Gastrocnemius medialis (tissue), 4 donors: ENCODE measurements at regions of chr6 and their contacts with region 1.

Region 1: GRCh38 chr6:31862344-31863227 is at the start of gene NEU1:
- DNase-seq: peak; percentile 100
- ATAC-seq: peak; percentile 97
- H3K4me3 ChIP-seq: peak within 1 kb of the TSS; percentile 69 to 92 (median 82)
- H3K27ac ChIP-seq: peak within 1 kb of the TSS; percentile 83 to 91 (median 88)
- H3K4me1 ChIP-seq: peaks cover 20 to 22% of the 10 kb centered on the region in 2 donors
- H3K27me3 ChIP-seq: no peaks in the 10 kb centered on the region
- CTCF ChIP-seq: no peak
- POLR2A ChIP-seq: peak; percentile 97 to 99
- total RNA-seq, gene NEU1: 20.8 to 42.7 (median 38.1) TPM

Region 2: DNA sequence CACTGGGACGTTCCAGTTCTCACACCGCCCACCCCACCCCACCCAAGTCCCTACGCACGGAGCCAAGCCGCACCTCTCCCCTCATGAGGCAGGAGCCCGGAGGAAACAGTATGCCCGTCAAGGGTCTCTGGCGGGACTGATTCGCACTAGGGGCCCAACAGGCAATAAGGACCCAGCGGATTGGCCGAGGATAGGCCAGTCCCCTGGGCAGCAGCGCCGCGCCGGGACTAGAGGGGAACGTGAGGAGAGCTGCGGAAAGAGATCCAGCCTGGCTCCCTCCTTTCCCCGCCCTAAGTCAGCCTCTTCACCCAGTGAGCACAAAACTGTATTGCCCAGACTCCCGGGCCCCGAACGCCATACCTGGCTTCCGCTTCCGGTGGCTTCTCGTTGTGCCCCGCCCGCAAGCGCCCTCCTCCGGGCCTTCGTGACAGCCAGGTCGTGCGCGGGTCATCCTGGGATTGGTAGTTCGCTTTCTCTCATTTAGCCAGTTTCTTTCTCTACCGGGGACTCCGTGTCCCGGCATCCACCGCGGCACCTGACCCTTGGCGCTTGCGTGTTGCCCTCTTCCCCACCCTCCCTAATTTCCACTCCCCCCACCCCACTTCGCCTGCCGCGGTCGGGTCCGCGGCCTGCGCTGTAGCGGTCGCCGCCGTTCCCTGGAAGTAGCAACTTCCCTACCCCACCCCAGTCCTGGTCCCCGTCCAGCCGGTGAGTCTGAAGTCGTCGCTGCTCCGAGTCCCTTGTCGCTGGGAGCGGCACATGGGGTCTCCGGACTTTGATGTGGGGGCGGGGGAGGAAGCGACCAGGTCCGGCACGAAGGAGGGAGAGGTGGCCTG is 196.9 kb before region 1 on chr6 and contains the start of gene CSNK2B:
- in situ Hi-C with region 1: no loop called
- intact Hi-C with region 1: loop called (anchors 1 kb)
- DNase-seq: peak; percentile 99
- ATAC-seq: peak; percentile 86
- H3K4me3 ChIP-seq: peak within 1 kb of the TSS; percentile 83 to 98 (median 94)
- H3K27ac ChIP-seq: peak within 1 kb of the TSS; percentile 93 to 100 (median 97)
- H3K4me1 ChIP-seq: peaks cover 25 to 36% of the 10 kb centered on the region in 2 donors
- H3K27me3 ChIP-seq: no peaks in the 10 kb centered on the region
- CTCF ChIP-seq: peak in 1 of 5 experiments; percentile 19
- POLR2A ChIP-seq: peak; percentile 72
- total RNA-seq, gene CSNK2B: 185 to 251 (median 226) TPM

Region 3: DNA sequence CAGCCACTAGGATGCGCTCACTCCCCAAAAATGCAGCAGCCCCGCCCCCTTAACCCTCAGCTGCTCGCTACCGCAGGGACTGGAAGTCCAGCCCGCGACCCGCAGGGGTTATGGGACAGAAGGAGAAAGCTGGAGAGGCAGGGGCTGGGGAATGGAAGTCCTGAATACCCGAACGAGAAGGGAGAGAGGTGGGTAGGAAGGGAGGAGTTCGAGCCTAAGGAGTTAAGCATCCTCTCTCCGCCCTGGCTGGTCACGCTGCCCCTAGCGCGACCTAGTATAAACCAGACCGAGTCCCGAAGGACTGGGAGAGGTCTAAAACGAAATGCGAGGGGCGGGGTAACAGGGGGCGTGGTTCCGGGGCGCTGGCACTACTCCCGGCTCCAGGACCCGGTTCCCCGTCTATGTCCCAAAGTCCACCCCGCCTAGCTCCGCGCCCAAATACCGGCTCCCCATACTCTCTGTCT is 133.0 kb before region 1 on chr6:
- in situ Hi-C with region 1: no loop called
- intact Hi-C with region 1: no loop called
- DNase-seq: peak; percentile 71 to 84
- ATAC-seq: peak; percentile 75 to 83
- H3K4me3 ChIP-seq: peak overlapping the region; percentile 62 to 95 (median 85)
- H3K27ac ChIP-seq: peak overlapping the region; percentile 78 to 92 (median 88)
- H3K4me1 ChIP-seq: peaks cover 9 to 11% of the 10 kb centered on the region in 2 donors
- H3K27me3 ChIP-seq: peaks cover 0 to 3% (median 0%) of the 10 kb centered on the region in 3 donors
- CTCF ChIP-seq: peak in 4 of 5 experiments; percentile 20 to 64 (median 42)
- POLR2A ChIP-seq: peak in 1 of 2 donors; percentile 16

Region 4: DNA sequence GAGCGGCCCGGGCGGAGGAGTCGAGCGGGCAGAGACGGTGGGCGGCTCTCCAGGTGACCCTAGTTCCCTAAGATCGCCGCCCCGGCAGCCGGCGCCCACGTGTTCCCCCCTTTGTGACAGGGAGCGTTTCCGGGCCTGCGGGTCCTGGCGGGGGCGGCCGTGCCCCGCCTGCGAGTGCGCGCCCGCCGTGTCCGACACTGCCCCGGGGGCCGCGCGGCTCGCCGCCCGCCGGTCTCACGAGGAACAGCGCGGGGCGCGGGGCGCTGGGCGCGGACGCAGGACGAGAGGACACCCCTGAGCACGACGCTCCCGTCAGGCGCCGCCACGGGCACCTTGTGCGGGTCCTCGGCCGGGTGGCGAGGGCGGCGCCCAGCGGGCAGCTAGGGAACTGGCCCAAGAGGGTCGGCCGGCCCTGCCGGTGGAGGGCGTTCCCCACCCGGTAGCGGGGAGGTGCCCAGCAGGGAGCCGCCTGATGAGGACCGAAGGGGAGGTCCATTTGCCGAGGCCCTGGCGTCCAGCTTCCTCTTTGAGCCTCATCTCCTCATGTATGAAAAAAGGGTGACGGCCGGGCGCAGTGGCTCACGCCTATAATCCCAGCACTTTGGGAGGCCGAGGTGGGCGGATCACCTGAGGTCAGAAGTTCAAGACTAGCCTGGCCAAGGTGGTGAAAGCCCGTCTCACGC is 66.8 kb before region 1 on chr6 and contains the start of gene VARS1:
- in situ Hi-C with region 1: no loop called
- intact Hi-C with region 1: loop called (anchors 2 kb)
- DNase-seq: peak; percentile 86 to 89
- ATAC-seq: peak; percentile 86 to 92
- H3K4me3 ChIP-seq: peak within 1 kb of the TSS; percentile 64 to 99 (median 82)
- H3K27ac ChIP-seq: peak within 1 kb of the TSS; percentile 85 to 97 (median 93)
- H3K4me1 ChIP-seq: peaks cover 24 to 26% of the 10 kb centered on the region in 2 donors
- H3K27me3 ChIP-seq: no peaks in the 10 kb centered on the region
- CTCF ChIP-seq: peak; percentile 86 to 97 (median 95)
- POLR2A ChIP-seq: peak; percentile 79 to 89
- total RNA-seq, gene VARS1: 39.2 to 102 (median 67.4) TPM

Region 5: GRCh38 chr6:31901953-31902643 is 39.5 kb after region 1 on chr6 and contains the start of gene ZBTB12:
- in situ Hi-C with region 1: no loop called
- intact Hi-C with region 1: loop called (anchors 1 kb)
- DNase-seq: peak; percentile 78 to 82
- ATAC-seq: peak; percentile 58 to 65
- H3K4me3 ChIP-seq: peak within 1 kb of the TSS; percentile 56 to 93 (median 80)
- H3K27ac ChIP-seq: peak within 1 kb of the TSS; percentile 78 to 89 (median 86)
- H3K4me1 ChIP-seq: peaks cover 15 to 19% of the 10 kb centered on the region in 2 donors
- H3K27me3 ChIP-seq: no peaks in the 10 kb centered on the region
- CTCF ChIP-seq: peak in 1 of 5 experiments; percentile 20
- POLR2A ChIP-seq: peak; percentile 22 to 33
- total RNA-seq, gene ZBTB12: 0.26 TPM in 1 of 4 donors, not detected in the others